Common myeloid progenitor, CD34-positive (primary cell): ENCODE measurements at regions of chr4 and their contacts with region 1.

Region 1: DNA sequence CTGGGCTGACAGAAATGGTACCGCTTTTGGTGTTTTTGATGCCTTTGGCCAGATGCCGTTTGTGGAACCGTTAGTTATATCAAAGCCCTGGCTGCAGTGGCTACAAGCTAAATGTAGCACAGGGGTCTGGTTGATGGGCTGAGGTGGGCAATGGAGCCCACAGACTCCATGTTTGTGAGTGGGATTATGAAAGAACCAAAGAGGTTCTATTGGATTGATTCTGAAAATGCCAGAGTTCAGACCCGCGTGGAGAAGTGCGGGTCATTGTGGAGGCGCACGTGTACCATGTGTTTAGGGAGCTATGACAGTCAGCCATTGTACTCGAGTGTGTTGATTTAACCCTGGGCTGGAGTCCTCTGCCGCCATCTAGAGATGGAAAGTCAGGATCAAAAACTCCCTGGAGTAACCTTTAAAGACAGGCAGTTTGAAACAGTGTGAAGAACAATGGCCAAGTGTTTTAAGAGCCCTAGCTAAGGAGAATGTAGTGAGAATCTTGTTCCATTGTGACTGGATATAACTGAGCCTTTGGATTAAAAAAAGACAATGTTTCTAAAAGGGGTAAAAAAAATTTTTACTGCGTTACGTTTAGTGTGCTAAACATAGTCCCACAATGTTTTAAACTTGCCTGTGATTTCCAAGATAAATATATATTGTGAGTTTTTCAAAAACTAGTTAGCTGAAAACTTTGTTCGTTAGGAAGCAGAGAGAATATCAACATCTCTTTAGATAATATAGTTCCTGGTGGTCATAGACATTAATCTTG is 12.7 kb downstream of the ART3 start:
- DNase-seq: peak; percentile 44 to 61 (median 60)
- H3K4me3 ChIP-seq: no peak overlapping the region
- H3K27ac ChIP-seq: no peak overlapping the region
- H3K4me1 ChIP-seq: peaks cover 0 to 13% (median 8%) of the 10 kb centered on the region in 4 experiments
- H3K27me3 ChIP-seq: no peaks in the 10 kb centered on the region

Region 2: GRCh38 chr4:76105652-76106051 is 18.5 kb after region 1 on chr4:
- CTCF ChIA-PET with region 1: interaction called, 16 read pairs
- POLR2A ChIA-PET with region 1: no interaction called
- DNase-seq: no peak
- H3K4me3 ChIP-seq: no peak overlapping the region
- H3K27ac ChIP-seq: no peak overlapping the region
- H3K4me1 ChIP-seq: no peaks in the 10 kb centered on the region
- H3K27me3 ChIP-seq: no peaks in the 10 kb centered on the region